ENCODE measurements at regions of chr19 and their contacts with region 1.

Region 1: GRCh38 chr19:23969630-23970029 is 54.9 kb downstream of the ZNF726 start:
- DNase-seq: no peak

Region 2: DNA sequence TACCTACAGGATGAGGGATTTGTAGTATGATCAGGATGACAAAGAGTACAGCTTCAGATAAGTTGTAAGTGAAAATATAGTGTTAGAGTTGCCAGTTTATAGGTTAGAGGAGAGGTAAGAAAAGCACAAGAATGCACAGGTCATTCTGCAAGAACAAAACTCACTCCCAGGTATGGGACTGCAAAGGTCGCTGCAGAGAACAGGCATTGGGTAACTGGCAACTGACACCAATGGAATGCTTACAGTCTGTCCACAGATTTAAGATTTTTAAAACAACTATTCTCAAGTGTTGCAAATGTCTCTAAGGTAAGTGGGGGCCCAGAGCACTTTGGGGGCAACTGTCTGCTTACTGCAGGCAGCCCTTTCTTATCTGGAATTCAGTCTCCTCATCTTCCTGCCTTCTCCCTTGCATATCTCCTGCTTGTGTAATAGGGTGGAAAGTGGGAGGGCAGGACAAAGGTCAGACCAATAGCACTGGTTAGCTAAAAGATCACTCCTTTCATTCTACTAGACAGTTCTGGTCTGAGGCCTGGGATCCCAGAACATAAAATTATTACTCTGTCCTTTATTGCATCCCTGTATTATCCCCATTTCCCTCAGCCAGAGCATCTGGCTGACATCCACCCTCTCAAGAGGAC is 97.2 kb before region 1 on chr19:
- intact Hi-C with region 1: loop called (anchors 5 kb)
- DNase-seq: no peak

Region 3: DNA sequence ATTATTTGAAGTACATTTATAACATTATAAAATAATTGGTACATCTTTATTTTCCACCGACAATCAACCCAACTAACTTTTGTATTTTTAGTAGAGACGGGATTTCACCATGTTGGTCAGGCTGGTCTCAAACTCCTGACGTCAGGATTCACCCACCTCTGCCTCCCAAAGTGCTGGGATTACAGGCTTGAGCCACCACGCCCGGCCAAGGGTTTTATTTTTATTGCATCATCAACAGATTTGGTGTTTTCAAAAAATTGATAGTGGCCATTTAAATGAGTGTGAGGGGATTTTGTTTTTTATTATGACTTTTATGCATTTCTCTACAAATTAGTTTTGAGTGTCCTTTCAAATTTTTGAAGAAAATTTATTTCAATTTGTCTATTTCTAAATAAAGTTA is 44.3 kb before region 1 on chr19:
- intact Hi-C with region 1: no loop called
- DNase-seq: peak in 1 of 10 donors; percentile 62